Dendritic cell treated with granulocyte-macrophage colony-stimulating factor and Interleukin-4, amounts not matched to agents 40 ng/mL and 50 ng/mL, for 4 days (primary cell): ENCODE measurements at regions of chr10 and their contacts with region 1.

Region 1: DNA sequence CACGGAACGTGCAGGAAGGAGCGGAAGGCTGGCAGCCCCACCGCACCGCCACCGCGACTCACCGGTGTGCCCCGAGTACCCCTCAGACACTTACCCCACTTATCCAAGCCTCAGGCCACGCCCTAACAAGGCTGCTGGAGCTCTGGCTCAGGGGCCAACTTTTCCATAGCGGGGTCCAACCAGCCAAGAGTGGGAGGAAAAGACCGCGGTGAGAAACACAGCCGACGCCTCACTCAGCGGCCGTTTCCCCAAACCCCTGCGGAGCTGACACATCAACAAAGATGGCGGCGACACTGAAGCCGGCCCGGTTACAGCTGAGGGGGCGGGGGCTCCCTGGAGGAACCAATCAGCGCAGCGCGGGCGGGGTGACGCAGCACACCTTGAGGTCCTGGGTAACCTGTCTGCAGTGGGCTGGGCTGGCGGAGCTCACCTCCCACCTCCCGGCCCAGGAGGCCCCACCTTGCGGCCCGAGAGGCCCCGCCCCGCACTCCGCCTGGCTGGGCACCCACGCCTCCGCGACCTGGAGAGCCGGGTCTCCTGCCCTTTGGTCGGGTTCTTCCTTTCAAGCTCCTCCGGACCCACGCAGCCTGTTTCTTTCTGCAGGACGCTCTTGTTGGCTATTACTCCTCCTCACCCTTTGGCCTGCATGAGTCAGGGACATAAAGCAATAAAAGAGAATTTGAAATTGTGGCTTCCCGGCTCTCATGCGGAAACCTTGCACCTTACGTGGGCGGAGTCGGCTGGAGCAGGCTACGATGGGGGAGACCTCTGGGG is at the start of gene CCDC186:
- H3K4me3 Mint-ChIP-seq: peak within 1 kb of the TSS; percentile 98
- H3K27ac Mint-ChIP-seq: peak within 1 kb of the TSS; percentile 99
- H3K4me1 Mint-ChIP-seq: peaks cover 18% of the 10 kb centered on the region
- H3K27me3 Mint-ChIP-seq: peaks cover 3% of the 10 kb centered on the region

Region 2: GRCh38 chr10:112183329-112184051 is 1990.6 kb before region 1 on chr10 and contains the start of gene GPAM:
- intact Hi-C with region 1: loop called (anchors 10 kb)
- H3K4me3 Mint-ChIP-seq: peak within 1 kb of the TSS; percentile 94
- H3K27ac Mint-ChIP-seq: peak within 1 kb of the TSS; percentile 91
- H3K4me1 Mint-ChIP-seq: peaks cover 21% of the 10 kb centered on the region
- H3K27me3 Mint-ChIP-seq: peaks cover 21% of the 10 kb centered on the region

Region 3: DNA sequence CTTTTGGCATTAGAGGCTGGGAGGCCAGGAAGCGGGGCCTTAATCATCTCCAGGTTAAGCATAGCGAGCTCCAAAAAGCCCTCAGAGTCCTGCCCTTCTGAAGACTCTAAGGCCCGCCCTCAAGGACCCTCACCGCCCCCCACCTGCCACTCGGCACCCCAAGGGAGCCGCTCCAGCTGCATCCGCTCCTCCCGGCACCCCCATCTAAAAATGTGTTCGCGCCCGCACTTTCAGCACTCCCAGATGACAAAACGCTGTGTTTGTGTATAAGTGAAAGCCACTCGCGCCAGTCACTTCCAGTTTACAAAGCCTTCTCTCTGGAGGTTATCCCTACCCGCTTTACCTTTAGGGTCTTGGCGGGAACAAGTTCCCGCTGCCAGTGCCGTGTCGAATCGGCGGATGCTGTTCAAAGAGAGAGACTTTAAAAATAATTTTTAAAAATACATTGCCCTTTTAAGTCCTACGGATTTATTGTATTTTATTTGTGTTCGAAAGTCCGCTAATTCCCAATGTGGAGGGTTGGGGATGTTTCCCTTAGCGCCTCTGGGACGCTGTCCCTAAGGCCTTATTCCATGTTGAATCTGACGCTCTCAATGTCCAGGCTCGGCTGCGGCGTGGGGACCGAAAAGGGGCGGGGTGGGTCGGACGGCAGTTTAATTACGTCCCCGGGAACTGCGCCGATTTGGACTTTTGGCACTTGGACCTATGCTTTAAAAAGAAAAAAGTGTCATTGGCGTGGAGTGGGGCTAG is 319.9 kb before region 1 on chr10 and contains the starts of genes DCLRE1A and NHLRC2:
- intact Hi-C with region 1: loop called (anchors 2 kb)
- H3K4me3 Mint-ChIP-seq: peak within 1 kb of the TSS; percentile 95
- H3K27ac Mint-ChIP-seq: peak within 1 kb of the TSS; percentile 98
- H3K4me1 Mint-ChIP-seq: peaks cover 15% of the 10 kb centered on the region
- H3K27me3 Mint-ChIP-seq: no peaks in the 10 kb centered on the region

Region 4: GRCh38 chr10:114631666-114632417 is 457.7 kb after region 1 on chr10:
- intact Hi-C with region 1: no loop called
- H3K4me3 Mint-ChIP-seq: peak overlapping the region; percentile 58
- H3K27ac Mint-ChIP-seq: no peak overlapping the region
- H3K4me1 Mint-ChIP-seq: peaks cover 12% of the 10 kb centered on the region
- H3K27me3 Mint-ChIP-seq: peaks cover 47% of the 10 kb centered on the region